CD4-positive, alpha-beta memory T cell (primary cell): ENCODE measurements at regions of chr19 and their contacts with region 1.

Region 1: GRCh38 chr19:10106100-10106936 is at the start of gene PPAN:
- DNase-seq: peak; percentile 96 to 98 (median 98)
- H3K4me3 ChIP-seq: peak within 1 kb of the TSS; percentile 58 to 74
- H3K4me3 Mint-ChIP-seq: peak within 1 kb of the TSS; percentile 72 to 92 (median 88)
- H3K27ac ChIP-seq: peak within 1 kb of the TSS; percentile 89
- H3K27ac Mint-ChIP-seq: peak within 1 kb of the TSS; percentile 95 to 100 (median 97)
- H3K4me1 ChIP-seq: peaks cover 77% of the 10 kb centered on the region
- H3K4me1 Mint-ChIP-seq: peaks cover 38 to 86% (median 59%) of the 10 kb centered on the region in 4 donors
- H3K27me3 ChIP-seq: no peaks in the 10 kb centered on the region
- H3K27me3 Mint-ChIP-seq: no peaks in the 10 kb centered on the region
- total RNA-seq, gene PPAN: 92.5 to 102 TPM

Region 2: DNA sequence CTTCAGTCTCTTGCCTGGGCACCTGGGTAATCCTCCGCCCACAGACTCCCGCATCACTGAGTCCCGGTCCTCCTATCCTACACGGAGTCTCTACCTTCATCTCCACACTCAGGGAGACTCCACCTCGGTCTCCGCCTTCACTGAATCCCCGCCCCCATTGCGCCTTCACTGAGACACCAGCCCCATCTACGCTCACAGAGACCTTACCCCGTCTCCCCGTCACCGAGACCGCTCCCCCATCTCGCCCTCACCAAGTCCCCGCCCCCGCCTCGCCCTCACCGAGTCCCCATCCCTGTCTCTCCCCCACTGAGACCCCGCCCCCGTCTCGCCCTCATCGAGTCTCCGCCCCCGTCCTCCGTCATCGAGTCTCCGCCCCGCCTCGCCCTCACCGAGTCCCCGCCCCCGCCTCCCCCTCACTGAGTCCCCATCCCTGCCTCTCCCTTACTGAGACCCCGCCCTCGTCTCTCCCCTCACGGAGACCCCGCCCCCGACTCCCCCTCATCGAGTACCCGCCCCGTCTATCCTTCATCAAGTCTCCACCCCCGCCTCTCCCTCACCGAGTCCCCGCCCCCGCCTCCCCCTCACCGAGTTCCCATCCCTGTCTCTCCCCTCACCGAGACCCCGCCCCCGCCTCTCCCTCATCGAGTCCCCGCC is 314.6 kb before region 1 on chr19:
- CTCF ChIA-PET with region 1: no interaction called
- POLR2A ChIA-PET with region 1: no interaction called
- intact Hi-C with region 1: no loop called
- DNase-seq: peak; percentile 86 to 98 (median 88)
- H3K4me3 ChIP-seq: peak overlapping the region; percentile 52 to 72
- H3K4me3 Mint-ChIP-seq: peak overlapping the region; percentile 84 to 92 (median 90)
- H3K27ac ChIP-seq: peak overlapping the region; percentile 94
- H3K27ac Mint-ChIP-seq: peak overlapping the region; percentile 92 to 99 (median 98)
- H3K4me1 ChIP-seq: peaks cover 14% of the 10 kb centered on the region
- H3K4me1 Mint-ChIP-seq: peaks cover 17 to 34% (median 27%) of the 10 kb centered on the region in 4 donors
- H3K27me3 ChIP-seq: no peaks in the 10 kb centered on the region
- H3K27me3 Mint-ChIP-seq: no peaks in the 10 kb centered on the region

Region 3: DNA sequence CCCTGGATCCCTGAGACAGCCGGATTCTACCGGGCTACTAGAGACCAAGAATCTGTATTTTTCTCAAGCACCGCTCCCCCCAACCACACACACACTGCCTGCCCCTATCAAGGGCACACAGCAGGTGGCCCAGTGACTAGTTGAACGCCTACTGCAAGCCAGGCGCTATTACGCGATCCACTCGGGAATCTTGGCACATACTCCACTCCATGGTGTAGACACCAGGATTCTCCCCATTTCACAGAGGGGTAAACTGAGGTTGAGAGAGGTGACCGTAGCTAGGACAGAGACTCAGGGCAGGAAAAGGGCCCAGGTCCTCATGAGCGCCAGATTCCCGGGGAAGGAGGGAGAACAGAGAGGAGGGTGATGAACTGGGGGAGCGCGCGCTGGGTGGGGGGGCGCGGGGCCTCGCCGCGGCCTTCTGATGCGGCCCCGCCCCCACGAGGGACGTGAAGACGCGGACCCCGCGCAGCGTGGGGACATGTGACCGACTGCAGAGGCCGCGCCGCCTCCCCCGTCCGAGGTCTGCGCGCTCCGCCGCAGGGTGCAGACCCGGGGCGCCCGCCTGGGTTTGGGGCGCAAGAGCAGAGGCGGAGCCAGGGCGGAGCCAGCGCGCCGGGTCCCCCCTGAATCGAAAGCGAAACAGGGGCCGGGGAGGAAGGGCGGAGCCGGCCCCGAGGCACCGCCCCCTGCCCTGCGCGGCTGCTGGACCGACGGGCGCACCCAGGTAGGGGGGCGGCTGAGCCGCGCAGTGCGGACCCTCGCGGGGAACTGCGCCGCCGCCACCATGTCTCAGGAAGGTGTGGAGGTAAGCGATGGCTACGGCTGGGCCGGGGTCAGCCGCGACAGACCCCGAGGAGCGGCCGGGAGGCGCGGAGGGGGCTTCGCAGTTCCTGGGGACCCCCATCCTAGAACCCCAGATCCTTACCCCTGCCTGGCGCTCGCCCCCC is 20.4 kb before region 1 on chr19 and contains the start of gene SHFL:
- CTCF ChIA-PET with region 1: no interaction called
- POLR2A ChIA-PET with region 1: interaction called, 3 read pairs
- intact Hi-C with region 1: loop called (anchors 1 kb)
- DNase-seq: peak; percentile 82 to 86 (median 83)
- H3K4me3 ChIP-seq: peak within 1 kb of the TSS; percentile 76 to 84
- H3K4me3 Mint-ChIP-seq: peak within 1 kb of the TSS; percentile 85 to 90 (median 87)
- H3K27ac ChIP-seq: peak within 1 kb of the TSS; percentile 88
- H3K27ac Mint-ChIP-seq: peak within 1 kb of the TSS; percentile 84 to 91 (median 87)
- H3K4me1 ChIP-seq: peaks cover 12% of the 10 kb centered on the region
- H3K4me1 Mint-ChIP-seq: peaks cover 6 to 17% (median 13%) of the 10 kb centered on the region in 4 donors
- H3K27me3 ChIP-seq: no peaks in the 10 kb centered on the region
- H3K27me3 Mint-ChIP-seq: no peaks in the 10 kb centered on the region
- total RNA-seq, gene SHFL: 112 TPM

Region 4: DNA sequence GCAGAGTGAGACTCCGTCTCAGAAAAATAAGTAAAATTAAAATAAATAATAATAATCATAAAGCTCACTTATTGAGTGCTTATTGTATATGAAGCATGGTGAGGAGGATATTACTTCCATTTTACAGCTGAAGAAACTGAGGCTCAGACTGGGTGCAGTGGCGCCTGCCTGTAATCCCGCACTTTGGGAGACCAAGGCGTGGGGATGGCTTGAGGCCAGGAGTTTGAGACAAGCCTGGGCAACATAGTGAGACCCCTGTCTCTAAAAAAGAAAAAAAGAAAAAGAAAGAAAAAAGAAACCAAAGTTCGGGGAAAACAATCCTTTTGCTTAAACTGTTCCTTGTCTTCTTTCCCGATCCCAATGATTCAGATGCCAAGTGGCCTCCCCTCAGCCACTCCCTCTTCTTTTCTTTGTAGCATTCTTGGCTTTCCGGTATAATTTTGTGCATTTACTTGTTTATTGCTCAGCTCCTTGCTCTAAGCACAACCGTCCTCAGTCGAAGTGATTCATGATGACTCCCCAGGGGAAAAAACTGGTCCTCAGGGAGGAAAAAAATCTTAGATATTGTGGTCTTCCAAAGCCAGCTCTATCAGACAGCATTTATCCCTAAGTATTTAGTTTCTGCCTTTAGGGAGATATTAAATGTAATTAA is 14.3 kb after region 1 on chr19:
- CTCF ChIA-PET with region 1: interaction called, 8 read pairs
- POLR2A ChIA-PET with region 1: interaction called, 172 read pairs
- intact Hi-C with region 1: loop called (anchors 2 kb)
- DNase-seq: no peak
- H3K4me3 ChIP-seq: no peak overlapping the region
- H3K4me3 Mint-ChIP-seq: peak overlapping the region in 3 of 8 donors; percentile 9 to 55 (median 27)
- H3K27ac ChIP-seq: no peak overlapping the region
- H3K27ac Mint-ChIP-seq: no peak overlapping the region
- H3K4me1 ChIP-seq: peaks cover 25% of the 10 kb centered on the region
- H3K4me1 Mint-ChIP-seq: peaks cover 3 to 35% (median 10%) of the 10 kb centered on the region in 4 donors
- H3K27me3 ChIP-seq: no peaks in the 10 kb centered on the region
- H3K27me3 Mint-ChIP-seq: no peaks in the 10 kb centered on the region

Region 5: GRCh38 chr19:10194500-10195289 is 88.4 kb after region 1 on chr19 and contains the start of gene DNMT1:
- CTCF ChIA-PET with region 1: no interaction called
- POLR2A ChIA-PET with region 1: interaction called, 3 read pairs
- intact Hi-C with region 1: loop called (anchors 5 kb)
- DNase-seq: peak; percentile 94 to 98 (median 95)
- H3K4me3 ChIP-seq: peak within 1 kb of the TSS; percentile 61 to 62
- H3K4me3 Mint-ChIP-seq: peak within 1 kb of the TSS; percentile 90 to 97 (median 96)
- H3K27ac ChIP-seq: peak within 1 kb of the TSS; percentile 77
- H3K27ac Mint-ChIP-seq: peak within 1 kb of the TSS; percentile 83 to 97 (median 95)
- H3K4me1 ChIP-seq: peaks cover 41% of the 10 kb centered on the region
- H3K4me1 Mint-ChIP-seq: peaks cover 22 to 52% (median 37%) of the 10 kb centered on the region in 4 donors
- H3K27me3 ChIP-seq: no peaks in the 10 kb centered on the region
- H3K27me3 Mint-ChIP-seq: no peaks in the 10 kb centered on the region
- total RNA-seq, gene DNMT1: 208 to 250 TPM